Activated CD4-positive, alpha-beta memory T cell treated with anti-CD3 and anti-CD28 coated beads, Interleukin-2, amount 10 ng/mL, durations not matched to agents 7 days and 5 days (primary cell): ENCODE measurements at regions of chr9 and their contacts with region 1.

Region 1: DNA sequence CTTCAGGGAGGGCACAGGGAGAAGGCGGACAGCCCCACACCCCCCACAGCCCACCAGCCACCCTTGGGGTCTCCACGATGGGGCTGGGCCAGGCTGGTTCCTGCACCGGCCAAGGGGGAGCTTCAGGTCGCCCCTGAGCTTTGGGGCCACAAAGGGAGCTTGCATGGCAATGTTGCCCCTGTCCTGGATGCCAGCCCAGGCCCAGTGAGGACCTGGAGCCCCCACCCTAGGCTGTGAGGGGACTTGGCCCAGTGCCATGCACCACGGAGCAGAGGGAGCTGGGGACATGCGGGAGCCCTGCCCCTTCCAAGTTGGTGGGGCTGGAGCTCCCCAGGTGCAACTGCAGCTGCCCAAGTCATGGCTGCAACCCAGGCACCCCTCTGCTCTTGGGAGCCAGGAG is 18.4 kb downstream of the TMEM38B start:
- DNase-seq: no peak
- H3K4me3 Mint-ChIP-seq: no peak overlapping the region
- H3K27ac Mint-ChIP-seq: no peak overlapping the region
- H3K4me1 Mint-ChIP-seq: peaks cover 9% of the 10 kb centered on the region
- H3K27me3 Mint-ChIP-seq: no peaks in the 10 kb centered on the region

Region 2: GRCh38 chr9:105608721-105609598 is 103.8 kb before region 1 on chr9:
- CTCF ChIA-PET with region 1: interaction called, 19 read pairs
- POLR2A ChIA-PET with region 1: no interaction called
- DNase-seq: no peak
- H3K4me3 Mint-ChIP-seq: no peak overlapping the region
- H3K27ac Mint-ChIP-seq: no peak overlapping the region
- H3K4me1 Mint-ChIP-seq: no peaks in the 10 kb centered on the region
- H3K27me3 Mint-ChIP-seq: no peaks in the 10 kb centered on the region

Region 3: DNA sequence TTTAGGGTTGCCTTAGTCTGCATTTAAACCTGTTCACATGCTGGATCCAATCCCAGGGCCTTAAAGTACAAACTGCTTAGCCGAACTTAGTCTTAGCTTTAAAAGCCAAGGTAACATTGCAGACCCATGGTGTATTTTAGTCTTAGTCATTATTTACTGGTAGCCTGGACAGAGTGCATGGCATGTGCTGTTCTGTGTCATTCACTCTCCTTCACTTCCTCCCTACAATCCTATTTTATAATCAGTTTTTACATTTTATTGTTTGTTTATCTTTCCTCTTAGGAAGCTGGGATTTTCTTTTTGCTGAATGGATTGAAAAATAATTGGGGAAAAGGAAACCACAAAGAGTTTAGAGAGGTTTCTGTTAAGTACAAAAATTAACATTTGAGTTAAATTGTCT is 80.0 kb before region 1 on chr9:
- CTCF ChIA-PET with region 1: no interaction called
- POLR2A ChIA-PET with region 1: no interaction called
- DNase-seq: no peak
- H3K4me3 Mint-ChIP-seq: no peak overlapping the region
- H3K27ac Mint-ChIP-seq: no peak overlapping the region
- H3K4me1 Mint-ChIP-seq: no peaks in the 10 kb centered on the region
- H3K27me3 Mint-ChIP-seq: no peaks in the 10 kb centered on the region

Region 4: GRCh38 chr9:105694190-105694847 is 18.5 kb before region 1 on chr9 and contains the start of gene TMEM38B:
- CTCF ChIA-PET with region 1: interaction called, 15 read pairs
- POLR2A ChIA-PET with region 1: interaction called, 3 read pairs
- DNase-seq: peak; percentile 80
- H3K4me3 Mint-ChIP-seq: peak within 1 kb of the TSS; percentile 81
- H3K27ac Mint-ChIP-seq: peak within 1 kb of the TSS; percentile 52
- H3K4me1 Mint-ChIP-seq: peaks cover 15% of the 10 kb centered on the region
- H3K27me3 Mint-ChIP-seq: peaks cover 23% of the 10 kb centered on the region
- total RNA-seq, gene TMEM38B: 8.1 to 9.2 TPM